PC-9 (cell line): ENCODE measurements at regions of chr1 and their contacts with region 1.

Region 1: DNA sequence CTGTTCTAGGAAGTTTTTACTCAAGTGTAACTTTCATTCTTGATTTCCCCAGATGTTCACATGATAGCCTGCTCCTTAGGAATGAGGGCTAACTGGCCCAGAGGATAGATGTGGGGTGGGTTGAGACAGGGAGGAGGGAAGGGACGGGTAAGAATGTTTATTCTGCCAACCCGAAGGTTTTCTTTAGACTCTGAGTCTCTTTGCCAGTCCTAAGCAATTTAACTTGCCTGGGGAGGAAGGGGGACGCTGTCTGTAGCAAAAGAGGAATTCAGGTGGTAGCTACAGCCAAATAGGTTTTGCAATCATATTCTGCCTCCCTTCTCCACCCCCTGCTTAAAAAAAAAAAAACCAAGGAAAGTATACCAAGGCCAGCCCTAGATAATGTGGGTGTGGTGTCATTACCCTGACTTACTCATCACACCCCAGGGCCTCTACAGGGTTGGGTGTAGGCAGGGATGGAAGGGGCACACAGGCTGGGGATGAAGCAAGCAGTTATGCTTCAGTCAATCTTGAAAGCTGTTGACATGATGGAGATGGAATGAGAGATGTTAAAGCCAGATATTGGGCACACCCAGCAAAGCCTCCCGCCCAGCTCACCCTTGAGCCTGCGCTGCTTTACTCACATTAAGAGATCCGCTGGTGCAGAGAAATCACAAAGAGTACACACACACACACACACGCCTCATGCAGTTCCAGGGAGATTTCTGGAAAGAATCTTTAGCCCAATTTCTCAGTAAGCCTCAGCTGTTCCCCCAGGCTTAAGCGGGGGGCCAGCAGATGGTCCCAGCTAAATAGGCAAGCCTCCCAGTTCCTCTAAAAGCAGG is 59.9 kb downstream of the PLXNA2 start:
- DNase-seq: peak; percentile 91 to 99
- H3K4me3 ChIP-seq: peak overlapping the region; percentile 4; the same call in 1 of the 2 replicates
- H3K27ac ChIP-seq: peak overlapping the region; percentile 72
- H3K4me1 ChIP-seq: peaks cover 85% of the 10 kb centered on the region
- H3K27me3 ChIP-seq: no peaks in the 10 kb centered on the region
- CTCF ChIP-seq: no peak

Region 2: DNA sequence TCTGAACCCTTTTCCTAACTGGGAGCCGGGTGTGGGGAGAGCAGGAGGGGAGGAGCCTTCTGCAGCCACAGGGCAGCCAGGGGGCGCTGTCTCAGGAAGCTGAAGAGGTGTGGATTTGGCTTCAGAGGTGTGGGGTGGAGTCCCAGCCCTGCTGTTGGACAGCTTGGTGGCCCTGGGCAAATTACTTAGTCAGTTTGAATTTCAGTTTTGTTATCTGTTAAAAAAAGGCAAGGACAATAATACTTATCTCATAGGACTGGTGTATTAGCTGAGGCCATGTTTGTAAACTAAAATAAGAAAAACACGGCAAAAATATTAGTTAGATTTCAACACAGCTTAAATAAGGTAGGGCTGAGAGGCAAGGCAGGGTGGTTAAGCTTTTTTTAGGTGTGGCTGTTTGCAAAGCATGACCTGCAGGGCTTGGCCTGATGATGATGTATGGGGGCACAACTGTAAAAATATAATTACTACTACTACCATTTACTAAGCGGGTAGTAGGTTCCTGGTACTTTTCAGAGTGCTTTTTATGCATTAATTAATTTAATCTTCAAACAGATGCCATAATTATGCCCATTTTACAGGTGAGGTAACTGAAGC is 51.9 kb before region 1 on chr1:
- CTCF ChIA-PET with region 1: interaction called, 6 read pairs
- POLR2A ChIA-PET with region 1: no interaction called
- intact Hi-C with region 1: loop called (anchors 1 kb)
- DNase-seq: peak; percentile 75 to 90
- H3K4me3 ChIP-seq: peak overlapping the region; percentile 9; the same call in 1 of the 2 replicates
- H3K27ac ChIP-seq: peak overlapping the region; percentile 49
- H3K4me1 ChIP-seq: peaks cover 42% of the 10 kb centered on the region
- H3K27me3 ChIP-seq: no peaks in the 10 kb centered on the region
- CTCF ChIP-seq: peak; percentile 98

Region 3: GRCh38 chr1:208170252-208170651 is 14.0 kb before region 1 on chr1:
- CTCF ChIA-PET with region 1: no interaction called
- POLR2A ChIA-PET with region 1: interaction called, 6 read pairs
- intact Hi-C with region 1: loop called (anchors 1 kb)
- DNase-seq: no peak
- H3K4me3 ChIP-seq: no peak overlapping the region
- H3K27ac ChIP-seq: no peak overlapping the region
- H3K4me1 ChIP-seq: peaks cover 20% of the 10 kb centered on the region
- H3K27me3 ChIP-seq: no peaks in the 10 kb centered on the region
- CTCF ChIP-seq: no peak

Region 4: GRCh38 chr1:208221291-208221622 is 37.0 kb after region 1 on chr1:
- CTCF ChIA-PET with region 1: interaction called, 3 read pairs
- POLR2A ChIA-PET with region 1: no interaction called
- intact Hi-C with region 1: loop called (anchors 1 kb)
- DNase-seq: no peak
- H3K4me3 ChIP-seq: no peak overlapping the region
- H3K27ac ChIP-seq: peak overlapping the region; percentile 91
- H3K4me1 ChIP-seq: peaks cover 59% of the 10 kb centered on the region
- H3K27me3 ChIP-seq: no peaks in the 10 kb centered on the region
- CTCF ChIP-seq: no peak

Region 5: GRCh38 chr1:208238710-208239472 is 54.6 kb after region 1 on chr1:
- CTCF ChIA-PET with region 1: interaction called, 3 read pairs
- POLR2A ChIA-PET with region 1: no interaction called
- intact Hi-C with region 1: loop called (anchors 1 kb)
- DNase-seq: no peak
- H3K4me3 ChIP-seq: no peak overlapping the region
- H3K27ac ChIP-seq: no peak overlapping the region
- H3K4me1 ChIP-seq: peaks cover 49% of the 10 kb centered on the region
- H3K27me3 ChIP-seq: no peaks in the 10 kb centered on the region
- CTCF ChIP-seq: peak; percentile 83